Common myeloid progenitor, CD34-positive (primary cell): ENCODE measurements at regions of chr6 and their contacts with region 1.

Region 1: DNA sequence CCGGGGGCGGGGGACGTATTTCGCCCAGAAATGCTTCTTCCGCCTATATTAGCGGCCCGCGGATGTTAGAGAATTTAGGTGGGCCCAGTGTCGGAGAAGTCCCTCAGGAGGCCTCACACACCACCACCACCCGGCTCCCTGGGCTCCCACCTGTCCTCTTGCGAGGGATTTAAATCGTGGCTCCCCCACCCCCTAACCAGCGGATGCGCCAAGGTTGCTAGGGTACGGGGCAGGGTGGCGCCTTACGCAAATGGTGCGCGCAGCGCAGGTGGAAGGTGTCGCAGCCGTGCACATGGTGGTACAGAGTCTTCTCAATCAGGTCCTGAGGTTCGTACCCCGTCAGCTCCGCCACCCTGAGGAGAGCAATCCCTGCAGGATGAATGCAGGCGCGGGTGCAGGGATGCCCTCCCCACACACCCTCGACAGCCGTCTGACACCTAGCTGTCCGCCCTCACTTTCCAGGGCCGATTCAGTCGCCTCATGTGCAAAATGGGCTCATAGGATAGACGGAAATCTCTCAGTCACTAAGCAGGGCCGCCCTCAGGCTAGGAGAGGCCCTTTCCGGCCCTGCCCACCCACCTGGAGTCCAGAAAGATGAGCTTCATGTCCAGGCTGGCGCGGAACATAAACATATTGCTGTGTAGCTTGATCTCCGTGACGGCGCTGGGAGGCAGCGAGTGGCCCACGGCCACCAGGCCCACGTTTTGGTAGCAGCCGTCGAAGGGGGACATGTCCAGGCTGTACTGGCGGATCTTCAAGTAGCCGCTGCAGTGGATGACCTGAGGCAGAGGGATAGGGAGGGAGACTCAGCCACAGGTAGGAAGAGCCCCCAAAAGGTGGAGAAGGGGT is 16.6 kb downstream of the SIM1 start:
- DNase-seq: no peak
- H3K4me3 ChIP-seq: no peak overlapping the region
- H3K27ac ChIP-seq: no peak overlapping the region
- H3K4me1 ChIP-seq: peaks cover 0 to 6% (median 4%) of the 10 kb centered on the region in 4 experiments
- H3K27me3 ChIP-seq: peaks cover 33 to 98% (median 73%) of the 10 kb centered on the region in 5 experiments

Region 2: GRCh38 chr6:100464903-100465700 is 17.0 kb after region 1 on chr6 and contains the start of gene SIM1:
- CTCF ChIA-PET with region 1: interaction called, 14 read pairs
- POLR2A ChIA-PET with region 1: interaction called, 3 read pairs
- DNase-seq: peak in 2 of 3 donors; percentile 60 to 62
- H3K4me3 ChIP-seq: peak within 1 kb of the TSS in 3 of 7 experiments; percentile 36 to 46 (median 46)
- H3K27ac ChIP-seq: no peak within 1 kb of the TSS
- H3K4me1 ChIP-seq: peaks cover 0 to 11% (median 5%) of the 10 kb centered on the region in 4 experiments
- H3K27me3 ChIP-seq: peaks cover 33 to 100% (median 66%) of the 10 kb centered on the region in 5 experiments